Heart left ventricle (tissue), 16 donors: ENCODE measurements at regions of chr19 and their contacts with region 1.

Region 1: DNA sequence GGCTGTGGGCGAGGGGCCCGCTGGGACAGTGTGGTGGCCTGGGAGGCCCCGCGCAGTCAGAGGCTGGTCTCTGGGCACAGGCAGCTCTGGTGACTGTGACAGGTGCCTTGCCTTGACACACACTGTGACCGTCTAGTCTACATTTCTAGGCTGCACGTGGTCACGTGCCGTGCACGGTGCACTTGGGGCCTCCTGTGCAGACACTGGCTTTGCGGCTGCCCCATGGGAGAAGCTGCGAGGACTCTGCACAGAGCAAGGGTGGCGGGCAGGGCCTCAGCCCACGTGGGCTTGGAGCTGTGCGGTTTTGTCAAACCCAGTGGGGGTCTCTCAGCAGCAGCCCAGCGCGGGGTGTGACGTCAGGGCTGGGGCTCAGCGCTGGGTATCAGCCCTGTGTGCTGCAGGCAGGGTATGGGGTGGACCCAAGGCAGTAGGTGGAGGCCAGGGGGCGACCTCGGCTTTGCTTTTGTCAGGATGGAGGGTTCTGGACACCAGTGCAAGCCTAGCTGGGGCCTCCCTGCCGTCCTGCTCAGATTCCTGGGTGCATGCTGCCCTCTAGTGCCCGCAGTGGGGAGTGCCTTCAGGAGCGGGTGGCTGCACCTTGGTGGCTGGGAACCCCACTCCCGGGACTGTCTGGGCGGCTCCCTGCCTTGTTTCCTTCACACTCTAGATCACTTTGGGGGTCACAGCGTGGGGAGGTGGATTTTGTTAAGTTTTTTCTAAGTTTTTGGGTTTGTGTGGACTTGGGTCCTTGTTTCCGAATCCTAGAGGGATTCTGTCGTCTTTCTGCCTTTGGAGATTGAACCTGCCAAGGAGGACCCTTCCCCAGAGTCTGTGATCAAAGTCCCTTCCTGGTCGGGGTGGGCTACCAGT is 62.6 kb downstream of the KDM4B start:
- DNase-seq: peak; percentile 78 to 91 (median 83)
- ATAC-seq: peak; percentile 74 to 88 (median 80)
- H3K4me3 ChIP-seq: no peak overlapping the region
- H3K27ac ChIP-seq: peak overlapping the region in 3 of 12 donors; percentile 42 to 81 (median 74)
- H3K4me1 ChIP-seq: peaks cover 4 to 63% (median 32%) of the 10 kb centered on the region in 12 donors
- H3K27me3 ChIP-seq: no peaks in the 10 kb centered on the region
- CTCF ChIP-seq: peak; percentile 90 to 96 (median 95)
- POLR2A ChIP-seq: no peak

Region 2: DNA sequence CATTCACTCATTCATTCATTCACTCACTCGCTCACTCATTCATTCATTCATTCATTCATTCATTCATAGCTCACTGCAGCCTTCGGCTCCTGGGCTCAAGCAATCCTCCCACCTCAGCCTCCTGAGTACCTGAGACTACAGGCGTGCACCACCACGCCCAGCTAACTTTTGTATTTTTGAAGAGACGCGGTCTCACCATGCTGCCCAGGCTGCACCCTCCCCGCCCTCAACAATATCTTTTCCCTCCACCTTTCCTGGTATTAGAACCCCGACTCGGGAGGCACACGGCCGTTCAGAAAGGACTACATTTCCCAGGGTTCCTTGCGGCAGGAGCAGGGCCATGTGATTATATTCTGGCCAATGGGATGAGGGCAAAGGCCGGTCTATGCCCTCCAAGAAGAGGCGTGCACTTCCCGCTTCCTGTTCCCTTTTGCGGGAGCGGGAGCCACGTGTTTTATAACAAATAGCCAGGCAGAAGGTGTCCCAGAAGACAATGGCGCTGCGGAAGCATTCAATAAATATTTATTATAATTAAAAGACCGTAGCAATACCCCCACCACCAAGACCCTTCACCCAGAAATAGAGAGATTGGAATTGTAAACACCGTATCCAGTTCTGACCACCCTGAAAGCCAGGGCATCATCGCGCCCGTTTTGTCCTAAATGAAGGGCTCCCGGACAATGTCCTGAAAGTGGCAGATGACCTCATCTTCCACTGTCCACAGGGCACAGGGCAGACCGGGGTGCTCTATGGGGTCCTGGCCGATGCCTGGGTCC is 215.9 kb before region 1 on chr19:
- intact Hi-C with region 1: loop called in 8 of 10 experiments (anchors 2 to 5 kb)
- DNase-seq: peak; percentile 89 to 94 (median 93)
- ATAC-seq: peak; percentile 87 to 94 (median 92)
- H3K4me3 ChIP-seq: peak overlapping the region in 8 of 12 donors; percentile 0 to 44 (median 28)
- H3K27ac ChIP-seq: peak overlapping the region in 6 of 12 donors; percentile 12 to 66 (median 23)
- H3K4me1 ChIP-seq: peaks cover 0 to 36% (median 19%) of the 10 kb centered on the region in 12 donors
- H3K27me3 ChIP-seq: no peaks in the 10 kb centered on the region
- CTCF ChIP-seq: no peak
- POLR2A ChIP-seq: no peak

Region 3: GRCh38 chr19:4873930-4874329 is 157.5 kb before region 1 on chr19:
- intact Hi-C with region 1: loop called (anchors 1 to 5 kb)
- DNase-seq: no peak
- ATAC-seq: no peak
- H3K4me3 ChIP-seq: no peak overlapping the region
- H3K27ac ChIP-seq: no peak overlapping the region
- H3K4me1 ChIP-seq: peaks cover 0 to 18% (median 0%) of the 10 kb centered on the region in 12 donors
- H3K27me3 ChIP-seq: peaks cover 0 to 12% (median 0%) of the 10 kb centered on the region in 9 donors
- CTCF ChIP-seq: no peak
- POLR2A ChIP-seq: no peak

Region 4: DNA sequence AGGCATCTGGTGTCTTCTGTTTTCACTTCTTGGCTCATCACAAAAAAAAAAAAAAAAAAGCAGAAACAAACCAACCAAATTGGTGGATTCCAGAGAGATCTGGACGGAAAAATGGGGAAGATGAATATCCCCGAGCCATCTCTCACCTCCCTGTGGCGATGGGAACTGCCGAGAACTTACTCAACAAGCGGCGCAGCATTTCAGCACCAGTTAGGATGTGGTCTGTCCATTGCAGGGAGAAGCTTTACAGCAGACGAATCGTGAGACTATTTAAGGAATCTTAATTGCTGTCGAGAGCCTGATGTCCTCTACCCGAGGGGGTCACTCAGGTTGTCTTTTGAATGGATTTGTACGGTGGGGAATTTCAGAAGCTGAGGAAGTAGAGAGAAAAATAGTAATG is 79.8 kb before region 1 on chr19:
- intact Hi-C with region 1: no loop called
- DNase-seq: no peak
- ATAC-seq: peak in 2 of 4 donors; percentile 28 to 42
- H3K4me3 ChIP-seq: no peak overlapping the region
- H3K27ac ChIP-seq: no peak overlapping the region
- H3K4me1 ChIP-seq: peaks cover 0 to 3% (median 0%) of the 10 kb centered on the region in 12 donors
- H3K27me3 ChIP-seq: no peaks in the 10 kb centered on the region
- CTCF ChIP-seq: no peak
- POLR2A ChIP-seq: no peak

Region 5: DNA sequence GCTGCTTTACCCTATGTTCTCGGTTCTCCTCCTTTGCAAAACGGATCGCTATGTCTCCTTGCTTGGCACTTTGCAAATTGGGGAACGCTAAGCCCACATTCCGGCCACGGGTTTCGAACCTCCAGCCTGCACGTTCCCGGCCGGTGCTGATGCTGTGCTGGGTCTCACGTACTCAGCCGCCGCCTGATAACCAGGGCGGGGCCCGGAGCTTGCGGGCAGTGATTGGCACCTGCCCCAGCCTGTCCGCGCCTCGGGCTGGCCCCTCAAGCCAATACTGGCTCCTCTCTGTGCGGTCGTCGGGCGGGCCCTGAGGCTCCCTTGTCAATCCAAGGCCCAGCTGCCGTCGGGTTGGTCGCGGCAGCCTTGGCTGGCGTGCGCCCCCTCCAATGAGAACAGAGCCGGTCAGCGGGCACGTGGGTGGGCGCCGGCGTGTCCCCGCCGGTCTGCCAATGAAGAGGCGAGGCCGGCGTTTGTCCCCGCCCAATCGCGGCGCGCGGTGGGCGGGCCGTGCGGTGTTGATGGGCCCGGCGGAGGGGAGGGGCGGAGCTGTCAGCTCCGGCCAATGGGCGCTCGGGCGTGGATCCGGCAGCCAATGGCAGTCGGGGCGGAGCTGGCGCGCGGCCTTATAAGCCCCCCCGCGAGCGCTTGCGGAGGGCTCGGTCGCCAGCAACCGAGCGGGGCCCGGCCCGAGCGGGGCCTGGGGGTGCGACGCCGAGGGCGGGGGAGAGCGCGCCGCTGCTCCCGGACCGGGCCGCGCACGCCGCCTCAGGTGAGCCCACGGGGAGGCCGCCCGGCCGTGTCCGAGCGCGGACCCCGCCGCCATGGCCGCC is 62.8 kb before region 1 on chr19 and contains the start of gene KDM4B:
- intact Hi-C with region 1: loop called in 8 of 10 experiments (anchors 2 to 10 kb)
- DNase-seq: peak; percentile 99 to 100 (median 100)
- ATAC-seq: peak; percentile 95 to 98 (median 98)
- H3K4me3 ChIP-seq: peak within 1 kb of the TSS; percentile 54 to 92 (median 69)
- H3K27ac ChIP-seq: peak within 1 kb of the TSS; percentile 8 to 87 (median 69)
- H3K4me1 ChIP-seq: peaks cover 0 to 46% (median 33%) of the 10 kb centered on the region in 12 donors
- H3K27me3 ChIP-seq: no peaks in the 10 kb centered on the region
- CTCF ChIP-seq: no peak
- POLR2A ChIP-seq: peak; percentile 97
- total RNA-seq, gene KDM4B: 21.5 to 36.5 (median 28.1) TPM